Sigmoid colon (tissue), 7 donors: ENCODE measurements at regions of chr7 and their contacts with region 1.

Region 1: DNA sequence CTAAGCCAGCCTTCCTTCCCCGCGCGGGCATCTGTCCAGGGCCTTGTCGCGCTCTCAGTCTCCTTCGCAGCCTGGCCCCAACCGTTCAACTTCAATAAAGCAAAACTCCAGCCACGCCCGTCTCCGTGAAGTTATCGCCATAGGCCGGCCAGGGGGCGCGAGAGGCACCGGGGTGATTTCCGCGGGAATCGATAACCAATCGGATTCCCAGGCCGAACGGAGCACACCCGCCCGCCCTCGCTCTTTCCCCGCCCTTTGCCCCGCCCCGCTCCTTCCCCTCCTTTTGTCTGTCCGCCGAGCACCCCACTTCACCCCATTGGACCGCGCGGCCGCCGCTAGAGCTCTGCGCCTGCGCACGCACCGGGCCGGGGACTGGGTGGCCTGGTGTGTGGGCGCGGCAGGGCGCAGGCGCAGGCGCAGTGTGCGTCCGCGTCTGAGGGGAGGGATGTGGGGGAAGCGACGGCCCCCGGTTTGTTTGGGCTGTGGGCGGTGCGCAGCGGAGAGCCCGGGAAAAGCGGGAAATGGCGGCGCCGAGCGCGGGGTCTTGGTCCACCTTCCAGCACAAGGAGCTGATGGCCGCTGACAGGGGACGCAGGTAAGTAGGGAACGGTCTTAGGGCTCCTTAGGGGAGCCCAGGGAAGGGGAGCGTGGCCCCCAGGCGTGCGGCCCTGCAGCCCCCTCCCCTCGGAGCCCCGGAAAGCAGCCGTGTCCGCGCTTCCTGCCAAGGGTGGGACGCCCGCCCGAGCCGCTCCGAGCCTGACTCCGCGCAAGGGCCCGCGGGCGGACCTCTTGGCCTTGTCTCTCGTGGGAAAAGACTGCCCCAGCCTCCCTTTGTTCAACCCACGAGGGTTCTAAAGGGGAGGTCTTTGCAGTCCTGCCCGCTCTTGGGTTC is at the start of gene CASP2:
- DNase-seq: peak; percentile 99
- H3K4me3 ChIP-seq: peak within 1 kb of the TSS; percentile 88 to 99 (median 94)
- H3K27ac ChIP-seq: peak within 1 kb of the TSS; percentile 91 to 95 (median 94)
- H3K4me1 ChIP-seq: peaks cover 0 to 32% (median 27%) of the 10 kb centered on the region in 4 donors
- H3K27me3 ChIP-seq: no peaks in the 10 kb centered on the region
- CTCF ChIP-seq: peak in 2 of 4 experiments; percentile 13 to 27
- EP300 ChIP-seq: no peak
- POLR2A ChIP-seq: peak in 1 of 2 donors; percentile 62
- total RNA-seq, gene CASP2: 7.1 to 14.4 (median 7.8) TPM

Region 2: DNA sequence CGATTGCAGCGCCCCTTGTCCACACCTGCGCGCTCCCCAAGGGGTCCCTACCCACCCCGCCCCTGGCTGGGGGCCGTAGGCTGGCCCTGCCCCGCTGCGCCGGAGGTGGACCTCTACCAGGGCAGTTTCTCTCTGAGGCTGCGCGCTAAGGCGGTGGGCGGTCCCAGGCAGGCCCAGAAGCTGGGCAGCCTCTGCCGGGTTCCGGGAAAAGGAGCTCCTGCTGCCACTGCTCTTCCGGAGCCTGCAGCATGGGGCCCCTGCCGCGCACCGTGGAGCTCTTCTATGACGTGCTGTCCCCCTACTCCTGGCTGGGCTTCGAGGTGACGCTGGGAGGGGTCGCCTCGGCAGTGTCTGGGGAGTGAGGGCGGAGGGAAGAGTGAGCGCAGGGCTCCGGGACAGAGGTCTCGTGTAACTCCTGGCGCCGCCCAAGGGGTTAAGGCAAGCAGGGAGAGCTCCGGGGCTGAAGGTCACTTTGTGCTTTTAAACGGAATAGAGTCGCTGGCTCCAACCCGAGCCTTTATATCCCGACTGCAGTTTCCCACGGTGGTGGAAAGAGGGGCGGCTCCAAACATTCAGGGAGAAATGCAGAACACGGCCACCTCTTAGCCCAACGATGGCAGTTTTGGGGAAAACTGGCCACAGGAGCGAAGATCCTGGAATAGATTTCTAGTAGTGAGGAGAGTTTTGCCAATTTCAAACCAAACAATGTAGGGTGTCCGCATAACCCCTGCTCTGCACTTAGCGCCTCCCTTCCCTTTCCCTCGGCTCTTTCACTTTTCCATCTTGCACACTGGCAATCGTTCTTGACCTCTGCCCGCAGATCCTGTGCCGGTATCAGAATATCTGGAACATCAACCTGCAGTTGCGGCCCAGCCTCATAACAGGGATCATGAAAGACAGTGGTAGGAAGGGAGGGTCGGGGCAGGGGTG is 24.6 kb before region 1 on chr7 and contains the start of gene GSTK1:
- intact Hi-C with region 1: loop called (anchors 2 kb)
- DNase-seq: peak; percentile 90
- H3K4me3 ChIP-seq: peak within 1 kb of the TSS; percentile 79 to 83 (median 80)
- H3K27ac ChIP-seq: peak within 1 kb of the TSS; percentile 82 to 89 (median 87)
- H3K4me1 ChIP-seq: peaks cover 0 to 28% (median 20%) of the 10 kb centered on the region in 4 donors
- H3K27me3 ChIP-seq: no peaks in the 10 kb centered on the region
- CTCF ChIP-seq: no peak
- EP300 ChIP-seq: no peak
- POLR2A ChIP-seq: peak; percentile 48 to 87
- total RNA-seq, gene GSTK1: 111 to 168 (median 134) TPM

Region 3: GRCh38 chr7:143434660-143435059 is 146.5 kb after region 1 on chr7:
- intact Hi-C with region 1: no loop called
- DNase-seq: no peak
- H3K4me3 ChIP-seq: no peak overlapping the region
- H3K27ac ChIP-seq: no peak overlapping the region
- H3K4me1 ChIP-seq: no peaks in the 10 kb centered on the region
- H3K27me3 ChIP-seq: no peaks in the 10 kb centered on the region
- CTCF ChIP-seq: no peak
- EP300 ChIP-seq: no peak
- POLR2A ChIP-seq: no peak